ENCODE measurements at regions of chr6 and their contacts with region 1.

Region 1: DNA sequence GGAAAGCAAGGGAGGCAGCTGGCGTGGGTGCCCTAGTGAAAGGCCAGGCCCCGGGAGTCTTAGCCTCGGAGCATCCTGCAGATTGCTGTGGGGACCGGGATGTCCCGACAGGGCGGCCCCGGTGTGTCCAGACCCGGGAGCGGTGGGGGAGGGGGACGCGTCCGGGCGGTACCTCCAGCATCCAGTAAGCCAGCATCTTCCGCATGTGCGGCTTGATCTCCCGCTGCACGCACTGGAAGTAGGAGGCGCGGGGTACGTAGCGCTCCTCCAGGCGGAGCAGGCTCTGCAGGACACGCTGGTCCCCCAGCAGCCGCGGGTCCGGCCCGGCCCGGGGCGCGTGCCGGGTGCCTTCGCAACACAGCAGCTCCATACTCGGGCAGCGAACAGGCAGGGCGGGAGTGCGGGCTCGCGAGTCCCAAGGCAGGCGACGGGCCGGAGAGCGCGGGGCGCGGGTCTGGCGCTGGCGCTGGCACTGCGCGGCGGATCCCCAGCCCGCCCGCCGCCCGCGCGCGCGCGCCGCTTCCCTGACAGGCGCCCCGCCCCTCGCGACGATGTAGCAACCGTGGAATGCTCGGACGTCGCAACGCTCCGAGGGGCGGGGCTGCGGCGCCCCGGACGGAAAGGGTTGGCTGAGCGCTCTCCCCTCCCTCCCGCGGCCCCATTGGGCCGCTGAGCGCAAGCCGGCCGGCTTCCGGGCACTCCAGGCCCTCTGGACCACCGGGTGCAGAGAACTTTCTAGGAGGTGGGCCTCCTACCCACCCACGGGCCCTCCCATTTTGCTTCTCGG is at the start of gene CCND3:
- DNase-seq: peak; percentile 64 to 82 (median 76)
- H3K4me3 ChIP-seq: peak within 1 kb of the TSS; percentile 53 to 92 (median 84)
- H3K27ac ChIP-seq: peak within 1 kb of the TSS in 1 of 2 experiments; percentile 67
- H3K4me1 ChIP-seq: peaks cover 30 to 58% (median 51%) of the 10 kb centered on the region in 4 experiments
- H3K27me3 ChIP-seq: no peaks in the 10 kb centered on the region

Region 2: DNA sequence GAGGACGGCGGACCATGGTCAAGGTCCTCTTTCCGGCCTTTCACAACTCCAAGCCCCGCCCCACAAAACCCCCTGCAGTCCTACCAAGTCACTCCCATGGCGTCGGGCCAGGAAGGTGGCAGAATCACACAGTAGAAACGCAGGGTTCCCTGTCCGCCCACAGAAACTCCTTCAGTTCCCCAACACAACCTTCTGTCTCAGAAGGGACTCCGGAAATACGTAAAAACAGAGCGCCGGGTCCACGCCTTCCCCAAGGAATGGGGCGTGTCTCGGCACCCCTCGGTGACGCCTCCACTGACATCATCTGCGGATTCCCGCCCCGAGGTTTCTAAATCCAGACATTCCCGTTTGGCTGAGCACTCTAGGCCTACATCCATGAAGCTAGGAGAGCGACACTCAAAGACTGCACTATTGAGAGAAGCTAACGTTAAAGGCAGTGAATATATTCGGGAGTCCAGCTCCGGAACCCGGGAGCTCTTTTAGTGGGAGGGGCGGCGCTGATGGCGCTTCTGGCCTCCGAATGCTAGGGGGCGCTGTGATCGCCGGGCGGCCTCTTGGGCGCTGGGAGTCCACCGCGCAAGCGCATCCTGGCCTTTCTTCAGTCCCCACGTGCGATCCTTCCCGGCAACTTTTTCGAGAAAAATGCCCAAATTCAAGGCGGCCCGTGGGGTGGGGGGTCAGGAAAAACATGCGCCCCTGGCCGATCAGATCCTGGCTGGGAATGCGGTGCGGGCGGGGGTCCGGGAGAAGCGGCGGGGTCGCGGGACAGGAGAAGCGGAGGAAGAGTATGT is 20.4 kb before region 1 on chr6 and contains the starts of genes BYSL and MED20:
- CTCF ChIA-PET with region 1: interaction called, 119 read pairs
- POLR2A ChIA-PET with region 1: no interaction called
- DNase-seq: peak; percentile 97 to 98 (median 98)
- H3K4me3 ChIP-seq: peak within 1 kb of the TSS; percentile 87 to 100 (median 99)
- H3K27ac ChIP-seq: peak within 1 kb of the TSS; percentile 96 to 97
- H3K4me1 ChIP-seq: peaks cover 20 to 38% (median 27%) of the 10 kb centered on the region in 4 experiments
- H3K27me3 ChIP-seq: no peaks in the 10 kb centered on the region

Region 3: DNA sequence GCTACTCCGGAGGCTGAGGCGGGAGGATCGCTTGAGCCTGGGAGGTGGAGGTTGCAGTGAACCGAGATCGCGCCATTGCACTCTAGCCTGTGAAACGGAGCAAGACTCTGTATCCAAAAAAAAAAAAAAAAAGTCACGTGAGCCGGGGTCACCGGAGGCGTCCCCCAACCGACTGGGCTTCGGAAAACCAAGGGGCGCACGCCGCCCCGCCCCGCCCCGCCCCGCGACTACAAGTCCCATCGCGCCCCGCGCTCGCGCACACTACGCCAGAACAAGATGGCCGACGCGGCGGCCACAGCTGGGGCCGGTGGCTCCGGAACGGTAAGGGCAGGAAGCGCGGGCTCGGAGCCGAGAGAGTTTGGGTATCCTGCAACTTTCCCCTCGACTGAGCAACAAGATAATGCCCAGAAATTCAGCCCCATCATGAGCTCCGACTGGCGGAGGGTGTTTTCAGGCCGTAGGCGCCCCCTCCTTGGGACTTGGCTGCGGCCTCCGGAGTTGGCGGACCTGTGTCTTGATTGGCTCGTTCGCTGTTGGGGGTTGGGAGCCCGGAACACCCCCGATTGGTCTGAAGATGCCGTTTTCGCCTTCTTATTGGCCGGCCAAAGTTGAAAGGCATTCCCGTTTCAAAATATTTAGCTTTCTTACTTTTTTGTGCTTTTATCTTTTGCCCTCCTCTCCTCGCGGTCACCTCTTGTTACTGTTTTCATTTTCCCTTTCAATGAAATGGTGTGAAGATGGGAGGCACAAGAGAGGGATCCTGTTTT is 109.0 kb after region 1 on chr6 and contains the start of gene TAF8:
- CTCF ChIA-PET with region 1: interaction called, 180 read pairs
- POLR2A ChIA-PET with region 1: interaction called, 4 read pairs
- DNase-seq: peak; percentile 93 to 96 (median 95)
- H3K4me3 ChIP-seq: peak within 1 kb of the TSS; percentile 62 to 98 (median 94)
- H3K27ac ChIP-seq: peak within 1 kb of the TSS; percentile 72 to 91
- H3K4me1 ChIP-seq: peaks cover 24 to 61% (median 53%) of the 10 kb centered on the region in 4 experiments
- H3K27me3 ChIP-seq: no peaks in the 10 kb centered on the region

Region 4: GRCh38 chr6:42086046-42087035 is 144.9 kb after region 1 on chr6:
- CTCF ChIA-PET with region 1: no interaction called
- POLR2A ChIA-PET with region 1: no interaction called
- DNase-seq: no peak
- H3K4me3 ChIP-seq: no peak overlapping the region
- H3K27ac ChIP-seq: no peak overlapping the region
- H3K4me1 ChIP-seq: no peaks in the 10 kb centered on the region
- H3K27me3 ChIP-seq: no peaks in the 10 kb centered on the region

Region 5: DNA sequence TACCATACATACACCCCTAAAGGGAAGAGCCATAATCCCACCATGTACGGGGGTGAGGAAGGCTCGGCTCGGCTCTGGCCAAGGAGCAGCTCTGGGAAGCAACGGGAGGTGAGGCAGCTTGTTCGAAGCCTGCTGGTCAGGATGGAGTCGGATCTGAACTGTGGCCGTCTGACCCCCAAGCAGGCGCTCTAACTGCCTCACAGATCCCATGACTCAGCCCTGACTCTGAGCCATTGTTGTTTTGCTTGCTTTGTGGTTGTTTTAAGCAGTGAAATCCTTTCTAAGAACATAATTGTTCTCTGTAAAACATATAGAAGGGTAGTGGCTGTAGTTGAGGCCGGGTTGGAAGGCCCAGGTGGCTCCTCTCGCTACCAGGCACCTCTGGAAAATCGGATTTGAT is 190.1 kb after region 1 on chr6:
- CTCF ChIA-PET with region 1: no interaction called
- POLR2A ChIA-PET with region 1: no interaction called
- DNase-seq: no peak
- H3K4me3 ChIP-seq: no peak overlapping the region
- H3K27ac ChIP-seq: no peak overlapping the region
- H3K4me1 ChIP-seq: peaks cover 0 to 5% (median 2%) of the 10 kb centered on the region in 4 experiments
- H3K27me3 ChIP-seq: peaks cover 0 to 1% (median 0%) of the 10 kb centered on the region in 5 experiments

Region 6: DNA sequence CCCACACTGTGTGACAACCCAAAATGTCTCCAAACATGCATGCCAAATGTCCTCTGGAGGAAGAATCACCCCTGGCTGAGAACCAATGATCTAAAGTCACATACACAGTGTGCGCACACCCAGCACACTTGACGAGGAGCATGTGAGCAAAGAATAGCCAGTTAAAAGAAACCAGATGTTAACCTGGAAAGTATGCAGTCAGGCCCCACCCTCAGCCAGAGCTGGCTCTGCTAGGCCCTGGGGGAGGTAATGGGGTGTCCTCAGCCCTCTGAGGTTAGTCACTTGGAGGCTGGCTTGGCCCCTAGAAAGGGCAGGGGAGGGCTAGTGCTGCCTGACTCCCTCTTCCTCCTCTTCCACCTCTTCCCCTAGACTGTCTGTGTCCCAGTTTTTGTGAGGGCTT is 216.5 kb after region 1 on chr6:
- CTCF ChIA-PET with region 1: no interaction called
- POLR2A ChIA-PET with region 1: no interaction called
- DNase-seq: no peak
- H3K4me3 ChIP-seq: no peak overlapping the region
- H3K27ac ChIP-seq: no peak overlapping the region
- H3K4me1 ChIP-seq: no peaks in the 10 kb centered on the region
- H3K27me3 ChIP-seq: peaks cover 0 to 3% (median 0%) of the 10 kb centered on the region in 5 experiments